ENCODE measurements at regions of chr7 and their contacts with region 1.

Region 1: DNA sequence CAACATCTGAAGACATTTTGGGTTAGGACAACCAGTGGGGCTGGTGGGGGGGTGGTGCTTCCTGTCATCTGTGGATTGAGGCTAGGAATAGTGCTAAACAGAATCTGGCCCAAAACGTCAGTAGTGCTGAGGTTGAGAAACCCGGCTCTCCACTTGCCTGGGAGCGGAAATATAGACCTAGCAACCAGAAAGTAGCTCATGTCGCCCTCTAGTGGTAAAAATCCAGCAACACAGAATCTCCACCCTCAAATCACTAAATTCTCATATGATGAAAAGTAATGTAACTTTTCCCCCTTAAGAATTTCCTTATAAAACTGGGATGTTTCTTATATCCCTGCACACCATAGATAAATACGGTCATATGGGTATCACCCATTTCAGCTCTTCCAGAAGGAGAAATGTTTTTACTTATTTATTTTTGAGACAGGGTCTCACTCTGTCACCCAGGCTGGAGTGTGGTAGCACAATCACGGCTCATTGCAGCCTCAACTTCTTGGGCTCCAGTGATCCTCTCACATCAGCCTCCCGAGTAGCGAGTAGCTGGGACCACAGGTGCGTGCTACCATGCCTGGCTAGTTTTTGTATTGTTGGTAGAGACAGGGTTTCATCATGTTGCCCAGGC is 34.4 kb downstream of the ZC3HAV1 start:
- DNase-seq: peak; percentile 73
- H3K4me3 ChIP-seq: no peak overlapping the region
- H3K27ac ChIP-seq: no peak overlapping the region
- H3K4me1 ChIP-seq: no peaks in the 10 kb centered on the region
- H3K27me3 ChIP-seq: no peaks in the 10 kb centered on the region
- CTCF ChIP-seq: peak; percentile 85

Region 2: GRCh38 chr7:138886501-138886917 is 188.6 kb before region 1 on chr7:
- intact Hi-C with region 1: loop called (anchors 5 kb)
- DNase-seq: peak; percentile 65
- H3K4me3 ChIP-seq: no peak overlapping the region
- H3K27ac ChIP-seq: no peak overlapping the region
- H3K4me1 ChIP-seq: peaks cover 4% of the 10 kb centered on the region
- H3K27me3 ChIP-seq: no peaks in the 10 kb centered on the region
- CTCF ChIP-seq: peak; percentile 61

Region 3: DNA sequence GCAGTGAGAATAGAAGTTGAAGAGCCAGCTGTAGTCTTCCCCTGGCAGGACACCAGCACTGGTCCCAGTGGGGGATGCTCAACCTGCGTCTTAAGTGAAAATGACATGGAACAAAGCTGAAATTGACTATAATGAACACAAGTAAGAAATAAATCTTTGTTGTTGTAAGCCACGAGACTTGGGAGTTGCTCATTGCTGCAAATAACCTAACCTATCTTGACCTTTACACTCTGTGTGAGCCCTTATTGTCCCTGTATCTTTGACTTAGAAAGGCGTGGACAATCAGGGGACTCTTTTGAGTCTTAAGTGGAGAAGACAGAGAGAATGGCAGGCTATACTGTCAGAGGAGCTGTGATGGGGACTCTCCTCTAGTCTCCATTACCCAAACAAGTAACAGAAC is 56.2 kb before region 1 on chr7:
- intact Hi-C with region 1: loop called (anchors 2 kb)
- DNase-seq: no peak
- H3K4me3 ChIP-seq: no peak overlapping the region
- H3K27ac ChIP-seq: no peak overlapping the region
- H3K4me1 ChIP-seq: no peaks in the 10 kb centered on the region
- H3K27me3 ChIP-seq: no peaks in the 10 kb centered on the region
- CTCF ChIP-seq: no peak